PC-9 (cell line): ENCODE measurements at regions of chr14 and their contacts with region 1.

Region 1: GRCh38 chr14:61252369-61253063 is 28.6 kb downstream of the TMEM30B start:
- DNase-seq: peak; percentile 83 to 94
- H3K4me3 ChIP-seq: no peak overlapping the region
- H3K27ac ChIP-seq: peak overlapping the region; percentile 56
- H3K4me1 ChIP-seq: peaks cover 7% of the 10 kb centered on the region
- H3K27me3 ChIP-seq: no peaks in the 10 kb centered on the region
- CTCF ChIP-seq: peak; percentile 94

Region 2: GRCh38 chr14:59964251-59965007 is 1288.1 kb before region 1 on chr14:
- CTCF ChIA-PET with region 1: no interaction called
- POLR2A ChIA-PET with region 1: no interaction called
- intact Hi-C with region 1: loop called (anchors 5 kb)
- DNase-seq: no peak
- H3K4me3 ChIP-seq: no peak overlapping the region
- H3K27ac ChIP-seq: no peak overlapping the region
- H3K4me1 ChIP-seq: no peaks in the 10 kb centered on the region
- H3K27me3 ChIP-seq: no peaks in the 10 kb centered on the region
- CTCF ChIP-seq: no peak

Region 3: DNA sequence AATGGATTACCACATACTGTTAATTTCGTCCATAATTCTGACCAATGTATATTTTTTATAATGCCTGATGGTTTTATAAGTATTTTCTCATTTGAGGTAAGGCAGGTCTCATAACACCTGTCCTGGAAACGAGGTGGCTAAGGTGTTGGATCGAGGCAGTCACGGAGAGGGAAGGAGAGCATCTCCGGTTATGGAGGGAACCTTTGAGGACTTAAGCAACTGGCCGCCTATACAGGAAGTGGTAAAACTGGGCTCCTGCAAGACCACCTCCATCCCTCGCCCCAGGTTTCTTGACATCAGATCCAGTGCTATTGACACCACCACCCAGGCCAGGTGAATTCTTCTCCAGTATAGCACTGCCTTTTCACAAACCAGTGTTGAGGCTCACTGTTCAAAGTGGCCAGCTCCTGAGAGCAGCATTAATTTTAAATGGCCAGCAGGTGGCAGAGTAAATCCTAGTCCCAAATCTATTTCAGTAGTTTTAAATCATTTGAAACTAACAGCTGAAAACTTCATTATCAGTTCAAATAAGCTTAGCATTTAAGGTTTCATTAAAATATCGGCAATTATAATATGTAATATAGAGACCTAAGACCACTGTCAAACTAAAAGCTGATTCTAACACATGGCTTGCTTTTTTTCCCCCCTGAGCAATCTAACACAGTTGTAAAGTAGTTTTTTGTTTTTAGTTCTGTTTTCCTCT is 902.7 kb before region 1 on chr14:
- CTCF ChIA-PET with region 1: no interaction called
- POLR2A ChIA-PET with region 1: no interaction called
- intact Hi-C with region 1: loop called (anchors 1 kb)
- DNase-seq: peak in 1 of 2 experiments; percentile 29
- H3K4me3 ChIP-seq: no peak overlapping the region
- H3K27ac ChIP-seq: no peak overlapping the region
- H3K4me1 ChIP-seq: no peaks in the 10 kb centered on the region
- H3K27me3 ChIP-seq: no peaks in the 10 kb centered on the region
- CTCF ChIP-seq: peak; percentile 87

Region 4: GRCh38 chr14:60622917-60623257 is 629.6 kb before region 1 on chr14:
- CTCF ChIA-PET with region 1: interaction called, 3 read pairs
- POLR2A ChIA-PET with region 1: no interaction called
- intact Hi-C with region 1: loop called (anchors 1 kb)
- DNase-seq: no peak
- H3K4me3 ChIP-seq: no peak overlapping the region
- H3K27ac ChIP-seq: no peak overlapping the region
- H3K4me1 ChIP-seq: no peaks in the 10 kb centered on the region
- H3K27me3 ChIP-seq: no peaks in the 10 kb centered on the region
- CTCF ChIP-seq: no peak

Region 5: GRCh38 chr14:60862286-60862685 is 390.2 kb before region 1 on chr14:
- CTCF ChIA-PET with region 1: no interaction called
- POLR2A ChIA-PET with region 1: no interaction called
- intact Hi-C with region 1: loop called (anchors 2 kb)
- DNase-seq: peak; percentile 72 to 84
- H3K4me3 ChIP-seq: peak overlapping the region; percentile 4; the same call in 1 of the 2 replicates
- H3K27ac ChIP-seq: peak overlapping the region; percentile 49
- H3K4me1 ChIP-seq: peaks cover 32% of the 10 kb centered on the region
- H3K27me3 ChIP-seq: no peaks in the 10 kb centered on the region
- CTCF ChIP-seq: no peak

Region 6: GRCh38 chr14:61025251-61026223 is 227.0 kb before region 1 on chr14:
- CTCF ChIA-PET with region 1: interaction called, 8 read pairs
- POLR2A ChIA-PET with region 1: no interaction called
- intact Hi-C with region 1: loop called (anchors 1 kb)
- DNase-seq: peak; percentile 62 to 65
- H3K4me3 ChIP-seq: no peak overlapping the region
- H3K27ac ChIP-seq: peak overlapping the region; percentile 38
- H3K4me1 ChIP-seq: peaks cover 9% of the 10 kb centered on the region
- H3K27me3 ChIP-seq: no peaks in the 10 kb centered on the region
- CTCF ChIP-seq: peak; percentile 93

Region 7: DNA sequence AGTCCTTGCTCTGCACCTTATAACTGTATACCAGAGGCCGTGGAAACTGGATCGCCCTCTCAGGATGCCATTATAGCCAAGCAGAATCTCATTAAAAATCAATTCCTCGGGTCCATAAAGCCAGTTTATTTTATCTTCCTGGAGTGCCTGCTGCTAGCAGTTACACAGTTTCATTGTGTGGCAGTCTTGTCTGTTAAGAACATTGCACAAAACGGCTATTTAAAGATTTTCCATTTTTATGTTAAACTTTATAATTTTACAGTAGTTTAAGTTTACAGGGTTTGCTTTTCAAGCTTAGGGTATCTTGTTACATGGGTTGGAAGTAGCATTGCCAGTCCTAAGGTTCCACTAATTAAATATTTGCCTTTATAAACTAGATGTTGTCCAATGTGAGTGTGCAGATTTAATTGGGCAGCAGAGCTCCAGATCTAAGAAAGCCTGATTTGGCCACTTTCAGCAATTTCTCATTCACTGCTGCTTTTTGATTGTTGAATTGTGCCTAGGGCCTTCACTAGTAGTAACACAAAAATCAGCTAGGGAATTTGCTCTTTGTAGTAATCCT is 11.6 kb after region 1 on chr14:
- CTCF ChIA-PET with region 1: no interaction called
- POLR2A ChIA-PET with region 1: no interaction called
- intact Hi-C with region 1: no loop called
- DNase-seq: no peak
- H3K4me3 ChIP-seq: no peak overlapping the region
- H3K27ac ChIP-seq: no peak overlapping the region
- H3K4me1 ChIP-seq: no peaks in the 10 kb centered on the region
- H3K27me3 ChIP-seq: no peaks in the 10 kb centered on the region
- CTCF ChIP-seq: no peak